Naive thymus-derived CD4-positive, alpha-beta T cell (primary cell): ENCODE measurements at regions of chr6 and their contacts with region 1.

Region 1: DNA sequence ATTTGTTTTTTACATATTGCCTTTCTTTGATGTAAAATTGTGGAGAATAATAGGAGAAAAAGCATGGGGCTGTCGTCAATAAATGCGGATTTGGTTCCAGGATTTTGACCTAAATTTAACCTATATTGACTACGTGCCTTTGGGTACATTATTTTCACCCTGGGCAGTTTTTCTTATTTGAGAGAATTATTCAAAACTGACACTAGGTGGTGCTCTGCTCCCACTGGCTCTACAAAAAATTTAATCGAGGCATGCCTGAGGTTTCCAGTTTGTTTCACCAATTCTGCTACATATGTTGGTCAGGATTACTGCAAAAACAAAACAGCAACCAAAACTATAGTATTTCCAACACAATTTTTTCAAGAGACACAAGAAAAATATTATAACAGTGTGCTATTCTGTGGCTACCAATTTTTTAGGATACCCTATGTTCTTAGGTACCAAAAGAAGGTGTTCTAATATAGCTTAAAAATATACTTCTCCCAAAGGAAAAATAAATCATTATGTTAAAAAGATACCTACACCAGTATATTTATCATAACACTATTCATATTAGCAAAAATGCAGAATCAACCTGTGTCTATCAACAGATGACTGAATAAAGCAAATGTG is 48.6 kb upstream of the FABP7 start:
- DNase-seq: peak in 5 of 9 donors; percentile 11 to 37 (median 17)
- ATAC-seq: no peak
- H3K4me3 ChIP-seq: no peak overlapping the region
- H3K4me3 Mint-ChIP-seq: no peak overlapping the region
- H3K27ac ChIP-seq: no peak overlapping the region
- H3K27ac Mint-ChIP-seq: no peak overlapping the region
- H3K4me1 ChIP-seq: no peaks in the 10 kb centered on the region
- H3K4me1 Mint-ChIP-seq: no peaks in the 10 kb centered on the region
- H3K27me3 ChIP-seq: peaks cover 0 to 3% of the 10 kb centered on the region in 2 donors
- H3K27me3 Mint-ChIP-seq: peaks cover 15 to 22% (median 18%) of the 10 kb centered on the region in 5 donors

Region 2: GRCh38 chr6:122432816-122433215 is 298.1 kb before region 1 on chr6:
- CTCF ChIA-PET with region 1: no interaction called
- POLR2A ChIA-PET with region 1: no interaction called
- intact Hi-C with region 1: no loop called
- DNase-seq: no peak
- ATAC-seq: no peak
- H3K4me3 ChIP-seq: no peak overlapping the region
- H3K4me3 Mint-ChIP-seq: no peak overlapping the region
- H3K27ac ChIP-seq: no peak overlapping the region
- H3K27ac Mint-ChIP-seq: peak overlapping the region in 6 of 9 donors; percentile 14 to 76 (median 62)
- H3K4me1 ChIP-seq: no peaks in the 10 kb centered on the region
- H3K4me1 Mint-ChIP-seq: peaks cover 0 to 20% (median 4%) of the 10 kb centered on the region in 7 donors
- H3K27me3 ChIP-seq: no peaks in the 10 kb centered on the region
- H3K27me3 Mint-ChIP-seq: no peaks in the 10 kb centered on the region

Region 3: DNA sequence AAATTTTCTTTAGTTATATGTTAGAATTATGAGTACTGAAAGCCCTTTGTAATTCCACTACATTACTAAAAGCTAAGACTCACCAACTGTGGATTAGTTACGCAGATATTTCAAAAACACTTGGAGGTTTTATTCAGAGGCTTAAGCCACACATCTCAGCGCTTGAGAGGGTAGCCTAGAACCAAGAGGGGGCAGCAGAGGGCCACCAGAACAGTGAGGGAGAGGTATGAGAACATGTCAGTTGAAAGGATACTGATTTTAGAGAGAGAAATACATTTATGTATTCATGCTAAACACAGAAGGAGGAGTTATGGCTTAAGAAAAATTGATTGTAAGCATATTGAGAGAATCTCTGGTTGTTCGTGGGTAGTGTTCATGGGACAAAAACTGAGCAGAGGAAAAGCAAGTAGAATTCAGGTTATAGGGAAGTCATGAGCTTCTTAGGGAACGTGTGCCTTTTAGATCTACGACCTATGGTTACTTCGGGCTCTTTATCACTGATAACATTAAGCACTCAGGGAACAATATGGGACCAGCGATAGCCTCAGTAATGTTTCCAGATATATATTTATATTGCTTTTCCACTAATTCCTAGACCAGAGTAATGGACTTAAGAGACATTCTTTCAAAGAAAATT is 238.8 kb before region 1 on chr6:
- CTCF ChIA-PET with region 1: no interaction called
- POLR2A ChIA-PET with region 1: no interaction called
- intact Hi-C with region 1: loop called in 1 of 2 experiments (anchors 1 kb)
- DNase-seq: peak; percentile 33 to 72 (median 64)
- ATAC-seq: peak; percentile 98
- H3K4me3 ChIP-seq: no peak overlapping the region
- H3K4me3 Mint-ChIP-seq: peak overlapping the region in 4 of 10 donors; percentile 3 to 55 (median 8)
- H3K27ac ChIP-seq: no peak overlapping the region
- H3K27ac Mint-ChIP-seq: no peak overlapping the region
- H3K4me1 ChIP-seq: no peaks in the 10 kb centered on the region
- H3K4me1 Mint-ChIP-seq: peaks cover 0 to 17% (median 7%) of the 10 kb centered on the region in 7 donors
- H3K27me3 ChIP-seq: peaks cover 0 to 3% of the 10 kb centered on the region in 2 donors
- H3K27me3 Mint-ChIP-seq: peaks cover 0 to 3% (median 2%) of the 10 kb centered on the region in 5 donors

Region 4: DNA sequence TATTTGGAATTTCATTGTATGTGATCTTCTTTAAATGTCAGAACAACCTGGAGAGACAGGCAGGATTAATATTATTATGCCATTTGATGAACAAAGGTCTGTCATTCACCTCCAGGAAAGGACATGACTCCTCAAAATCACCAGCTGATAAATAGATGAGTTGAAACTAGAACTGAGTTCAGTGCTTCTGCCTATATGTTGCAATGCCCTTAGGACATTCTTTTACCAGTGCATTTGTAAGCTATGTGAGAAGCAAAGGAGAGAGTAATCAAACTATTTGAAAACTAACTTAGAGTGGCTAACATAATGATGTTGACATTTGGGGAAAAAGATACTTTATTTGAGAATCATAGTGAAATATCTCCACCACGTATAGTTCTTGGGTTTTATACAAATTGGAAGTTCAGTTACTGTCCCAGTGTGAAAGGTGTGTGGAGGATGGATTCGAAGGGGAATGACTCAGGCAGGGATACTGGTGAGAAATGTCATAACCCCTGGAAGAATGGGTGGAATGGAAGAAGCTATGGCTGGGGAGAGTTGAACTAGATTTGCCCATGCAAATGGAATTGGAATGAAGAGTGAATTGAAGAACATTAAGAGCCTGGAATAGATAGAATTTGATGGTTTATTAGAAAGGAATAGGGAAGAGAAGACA is 99.2 kb before region 1 on chr6:
- CTCF ChIA-PET with region 1: no interaction called
- POLR2A ChIA-PET with region 1: no interaction called
- intact Hi-C with region 1: no loop called
- DNase-seq: no peak
- ATAC-seq: no peak
- H3K4me3 ChIP-seq: no peak overlapping the region
- H3K4me3 Mint-ChIP-seq: no peak overlapping the region
- H3K27ac ChIP-seq: no peak overlapping the region
- H3K27ac Mint-ChIP-seq: no peak overlapping the region
- H3K4me1 ChIP-seq: no peaks in the 10 kb centered on the region
- H3K4me1 Mint-ChIP-seq: no peaks in the 10 kb centered on the region
- H3K27me3 ChIP-seq: no peaks in the 10 kb centered on the region
- H3K27me3 Mint-ChIP-seq: peaks cover 4 to 23% (median 12%) of the 10 kb centered on the region in 5 donors

Region 5: GRCh38 chr6:122789182-122790027 is 58.5 kb after region 1 on chr6 and contains the start of gene SMPDL3A:
- CTCF ChIA-PET with region 1: no interaction called
- POLR2A ChIA-PET with region 1: no interaction called
- intact Hi-C with region 1: loop called in 1 of 2 experiments (anchors 5 kb)
- DNase-seq: peak in 2 of 9 donors; percentile 9 to 49
- ATAC-seq: peak; percentile 72
- H3K4me3 ChIP-seq: peak within 1 kb of the TSS; percentile 27
- H3K4me3 Mint-ChIP-seq: peak within 1 kb of the TSS; percentile 17 to 92 (median 78)
- H3K27ac ChIP-seq: no peak within 1 kb of the TSS
- H3K27ac Mint-ChIP-seq: peak within 1 kb of the TSS in 1 of 9 donors; percentile 47
- H3K4me1 ChIP-seq: no peaks in the 10 kb centered on the region
- H3K4me1 Mint-ChIP-seq: peaks cover 14 to 18% (median 15%) of the 10 kb centered on the region in 7 donors
- H3K27me3 ChIP-seq: peaks cover 3 to 7% of the 10 kb centered on the region in 2 donors
- H3K27me3 Mint-ChIP-seq: peaks cover 67 to 79% (median 73%) of the 10 kb centered on the region in 5 donors
- total RNA-seq, gene SMPDL3A: 0.24 to 6.3 (median 0.32) TPM

Region 6: DNA sequence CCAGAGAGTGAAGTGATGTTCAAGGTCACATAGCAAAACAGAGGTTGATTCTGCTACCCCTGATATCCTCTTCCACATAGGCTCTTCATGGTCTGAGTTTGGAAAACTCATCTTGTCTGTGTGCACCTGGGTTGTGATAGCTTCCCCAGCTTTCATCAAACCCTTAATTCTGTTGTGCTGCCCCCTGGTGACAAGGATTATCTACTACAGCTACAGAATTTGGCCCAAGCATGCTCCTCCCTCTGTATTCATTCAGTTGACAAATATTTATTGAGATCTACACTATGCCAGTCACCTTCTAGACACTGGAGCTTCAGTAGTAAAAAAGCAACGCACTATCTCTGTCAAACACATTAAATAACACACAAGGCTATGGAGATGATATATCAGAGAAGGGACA is 108.6 kb after region 1 on chr6:
- CTCF ChIA-PET with region 1: interaction called, 8 read pairs
- POLR2A ChIA-PET with region 1: no interaction called
- intact Hi-C with region 1: loop called (anchors 1 kb)
- DNase-seq: peak in 7 of 9 donors; percentile 18 to 47 (median 36)
- ATAC-seq: peak; percentile 79
- H3K4me3 ChIP-seq: no peak overlapping the region
- H3K4me3 Mint-ChIP-seq: no peak overlapping the region
- H3K27ac ChIP-seq: no peak overlapping the region
- H3K27ac Mint-ChIP-seq: no peak overlapping the region
- H3K4me1 ChIP-seq: no peaks in the 10 kb centered on the region
- H3K4me1 Mint-ChIP-seq: no peaks in the 10 kb centered on the region
- H3K27me3 ChIP-seq: no peaks in the 10 kb centered on the region
- H3K27me3 Mint-ChIP-seq: peaks cover 2 to 26% (median 9%) of the 10 kb centered on the region in 5 donors

Region 7: DNA sequence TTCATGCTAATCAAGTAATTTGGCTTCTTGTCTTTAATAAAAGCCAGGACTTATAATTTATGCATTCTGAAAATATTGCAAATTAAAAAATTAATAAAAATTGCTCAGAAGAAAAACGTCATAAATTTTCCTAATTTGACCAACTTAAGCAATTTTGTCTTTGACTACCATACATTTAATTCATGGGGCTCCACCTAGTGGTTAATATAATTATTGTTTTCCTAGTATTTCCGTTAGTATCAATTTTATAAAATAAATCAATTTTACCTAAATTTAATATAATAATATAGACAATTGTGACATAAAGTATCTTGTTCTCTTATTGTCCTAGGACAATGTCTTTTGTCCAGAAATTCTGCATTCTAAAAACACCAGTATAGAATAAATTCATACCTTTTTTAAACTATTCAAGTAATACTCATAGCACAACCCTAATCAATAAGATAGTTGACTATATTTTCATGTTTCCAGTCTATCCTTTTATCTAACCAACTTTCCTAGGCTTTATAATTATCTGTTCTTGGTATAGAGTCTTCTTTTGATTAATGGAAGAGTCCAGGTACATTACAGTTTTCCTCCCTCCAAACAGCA is 585.9 kb after region 1 on chr6:
- CTCF ChIA-PET with region 1: no interaction called
- POLR2A ChIA-PET with region 1: no interaction called
- intact Hi-C with region 1: loop called in 1 of 2 experiments (anchors 1 kb)
- DNase-seq: peak in 2 of 9 donors; percentile 1 to 14
- ATAC-seq: no peak
- H3K4me3 ChIP-seq: no peak overlapping the region
- H3K4me3 Mint-ChIP-seq: no peak overlapping the region
- H3K27ac ChIP-seq: no peak overlapping the region
- H3K27ac Mint-ChIP-seq: no peak overlapping the region
- H3K4me1 ChIP-seq: no peaks in the 10 kb centered on the region
- H3K4me1 Mint-ChIP-seq: no peaks in the 10 kb centered on the region
- H3K27me3 ChIP-seq: no peaks in the 10 kb centered on the region
- H3K27me3 Mint-ChIP-seq: no peaks in the 10 kb centered on the region

Region 8: GRCh38 chr6:123715006-123715875 is 984.4 kb after region 1 on chr6:
- CTCF ChIA-PET with region 1: no interaction called
- POLR2A ChIA-PET with region 1: no interaction called
- intact Hi-C with region 1: loop called in 1 of 2 experiments (anchors 10 kb)
- DNase-seq: no peak
- ATAC-seq: no peak
- H3K4me3 ChIP-seq: no peak overlapping the region
- H3K4me3 Mint-ChIP-seq: no peak overlapping the region
- H3K27ac ChIP-seq: no peak overlapping the region
- H3K27ac Mint-ChIP-seq: no peak overlapping the region
- H3K4me1 ChIP-seq: no peaks in the 10 kb centered on the region
- H3K4me1 Mint-ChIP-seq: no peaks in the 10 kb centered on the region
- H3K27me3 ChIP-seq: no peaks in the 10 kb centered on the region
- H3K27me3 Mint-ChIP-seq: no peaks in the 10 kb centered on the region